HepG2 (cell line): ENCODE measurements at regions of chr7 and their contacts with region 1.

Region 1: DNA sequence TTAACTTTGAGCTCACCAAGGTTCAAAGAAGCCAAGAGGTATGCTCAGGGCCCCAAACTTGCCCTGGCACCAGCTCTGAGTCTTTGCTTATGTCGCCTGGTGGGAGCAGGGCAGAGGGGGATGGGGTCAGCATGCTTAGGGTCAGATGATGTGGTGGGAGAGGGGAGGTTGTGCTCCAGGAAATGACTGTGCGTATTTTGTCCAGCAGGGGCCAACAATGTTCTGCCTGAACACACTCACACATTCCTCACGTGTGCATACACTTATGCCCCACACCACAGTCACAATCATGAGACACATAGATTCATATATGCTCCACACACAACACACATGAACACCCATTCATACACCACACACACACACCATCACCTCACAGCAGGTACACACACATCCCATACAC is 4.4 kb upstream of the RAMP3 start:
- DNase-seq: no peak
- ATAC-seq: no peak; the same call in 2 of the 3 replicates
- H3K4me3 ChIP-seq: no peak overlapping the region
- H3K27ac ChIP-seq: no peak overlapping the region
- H3K4me1 ChIP-seq: no peaks in the 10 kb centered on the region
- H3K27me3 ChIP-seq: peaks cover 6 to 59% of the 10 kb centered on the region in 2 experiments; a peak in 4 of 5 replicates
- CTCF ChIP-seq: no peak
- EP300 ChIP-seq: no peak
- POLR2A ChIP-seq: no peak
- RAD21 ChIP-seq: no peak

Region 2: GRCh38 chr7:45178241-45179225 is 25.3 kb after region 1 on chr7:
- CTCF ChIA-PET with region 1: no interaction called
- POLR2A ChIA-PET with region 1: no interaction called
- in situ Hi-C with region 1: no loop called
- intact Hi-C with region 1: no loop called
- DNase-seq: peak; percentile 4
- ATAC-seq: peak; percentile 69
- H3K4me3 ChIP-seq: no peak overlapping the region
- H3K27ac ChIP-seq: no peak overlapping the region
- H3K4me1 ChIP-seq: no peaks in the 10 kb centered on the region
- H3K27me3 ChIP-seq: peaks cover 6 to 35% of the 10 kb centered on the region in 2 experiments; a peak in 4 of 5 replicates
- CTCF ChIP-seq: peak; percentile 44
- EP300 ChIP-seq: no peak
- POLR2A ChIP-seq: no peak
- RAD21 ChIP-seq: no peak

Region 3: DNA sequence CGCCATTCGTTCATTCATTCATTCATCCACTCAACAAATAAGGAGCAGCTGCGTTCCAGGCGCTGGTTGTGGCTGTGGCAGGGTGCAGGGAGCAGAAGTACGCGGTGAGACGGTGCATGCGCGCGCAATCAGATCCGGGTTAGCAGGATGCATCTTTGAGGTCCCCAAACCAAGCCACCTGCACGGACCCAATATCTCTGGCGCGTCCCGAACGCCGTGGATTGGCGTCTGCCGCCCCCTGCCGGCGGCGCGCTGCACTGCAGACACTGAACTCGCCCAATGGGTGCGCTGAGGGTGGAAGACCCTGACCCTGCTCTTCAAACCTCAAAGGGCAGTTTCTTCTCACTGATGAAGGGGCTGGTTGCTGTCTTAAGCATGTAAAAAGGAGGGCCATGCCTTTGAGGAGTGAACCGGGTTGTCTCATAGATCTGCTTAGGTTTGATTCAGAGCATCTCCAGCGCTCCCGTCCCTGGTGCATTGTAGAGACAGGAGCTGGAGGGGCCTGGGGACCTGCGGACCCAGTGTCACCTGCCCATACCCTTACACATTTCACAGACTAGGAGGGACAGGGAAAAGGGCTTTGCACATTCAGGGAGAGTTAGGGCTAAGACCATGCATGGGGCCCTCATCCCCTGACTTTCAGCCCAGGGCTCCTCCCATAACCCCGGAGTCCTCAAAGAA is 106.9 kb after region 1 on chr7:
- CTCF ChIA-PET with region 1: interaction called, 37 read pairs
- POLR2A ChIA-PET with region 1: no interaction called
- in situ Hi-C with region 1: loop called (anchors 5 kb)
- intact Hi-C with region 1: no loop called
- DNase-seq: peak; percentile 10
- ATAC-seq: peak; percentile 96
- H3K4me3 ChIP-seq: no peak overlapping the region
- H3K27ac ChIP-seq: no peak overlapping the region
- H3K4me1 ChIP-seq: no peaks in the 10 kb centered on the region
- H3K27me3 ChIP-seq: peaks cover 0 to 16% of the 10 kb centered on the region in 2 experiments; a peak in 1 of 5 replicates
- CTCF ChIP-seq: peak; percentile 95
- EP300 ChIP-seq: no peak
- POLR2A ChIP-seq: no peak
- RAD21 ChIP-seq: peak; percentile 84

Region 4: GRCh38 chr7:45663167-45663921 is 510.1 kb after region 1 on chr7:
- CTCF ChIA-PET with region 1: no interaction called
- POLR2A ChIA-PET with region 1: no interaction called
- in situ Hi-C with region 1: no loop called
- intact Hi-C with region 1: loop called (anchors 5 kb)
- DNase-seq: peak; percentile 25
- ATAC-seq: peak; percentile 92
- H3K4me3 ChIP-seq: no peak overlapping the region
- H3K27ac ChIP-seq: no peak overlapping the region
- H3K4me1 ChIP-seq: peaks cover 9% of the 10 kb centered on the region; the same call in 1 of the 2 replicates
- H3K27me3 ChIP-seq: peaks cover 0 to 17% of the 10 kb centered on the region in 2 experiments; a peak in 1 of 5 replicates
- CTCF ChIP-seq: peak; percentile 98
- EP300 ChIP-seq: no peak
- POLR2A ChIP-seq: no peak
- RAD21 ChIP-seq: peak; percentile 92